ENCODE measurements at regions of chr10 and their contacts with region 1.

Region 1: GRCh38 chr10:25206693-25207414 is 32.1 kb downstream of the GPR158 start:
- DNase-seq: no peak
- H3K4me3 ChIP-seq: no peak overlapping the region
- H3K27ac ChIP-seq: no peak overlapping the region
- H3K4me1 ChIP-seq: no peaks in the 10 kb centered on the region
- H3K27me3 ChIP-seq: no peaks in the 10 kb centered on the region
- CTCF ChIP-seq: no peak

Region 2: DNA sequence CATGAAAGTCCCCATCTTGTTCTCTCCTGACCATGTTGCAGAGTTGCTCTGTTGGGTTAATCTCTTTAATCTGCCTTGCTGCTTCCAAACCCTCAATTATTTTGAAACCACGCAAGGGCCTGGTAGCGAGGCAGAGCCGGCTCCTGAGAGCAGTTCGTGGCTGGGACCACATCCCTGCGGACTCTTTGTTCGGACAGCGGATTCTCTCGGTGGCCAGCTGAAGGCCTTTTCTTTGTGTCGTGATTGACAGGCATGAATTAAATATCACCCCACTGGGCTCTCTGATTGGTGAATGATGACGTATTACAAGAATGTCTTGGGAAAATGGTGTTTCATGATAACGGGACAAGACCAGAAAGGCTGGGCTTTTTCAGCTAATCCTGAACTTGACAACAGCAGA is 416.3 kb before region 1 on chr10:
- CTCF ChIA-PET with region 1: no interaction called
- POLR2A ChIA-PET with region 1: no interaction called
- intact Hi-C with region 1: no loop called
- DNase-seq: no peak
- H3K4me3 ChIP-seq: no peak overlapping the region
- H3K27ac ChIP-seq: no peak overlapping the region
- H3K4me1 ChIP-seq: no peaks in the 10 kb centered on the region
- H3K27me3 ChIP-seq: no peaks in the 10 kb centered on the region
- CTCF ChIP-seq: no peak

Region 3: GRCh38 chr10:25159591-25159990 is 47.3 kb before region 1 on chr10:
- CTCF ChIA-PET with region 1: no interaction called
- POLR2A ChIA-PET with region 1: no interaction called
- intact Hi-C with region 1: no loop called
- DNase-seq: peak; percentile 19
- H3K4me3 ChIP-seq: no peak overlapping the region
- H3K27ac ChIP-seq: no peak overlapping the region
- H3K4me1 ChIP-seq: no peaks in the 10 kb centered on the region
- H3K27me3 ChIP-seq: no peaks in the 10 kb centered on the region
- CTCF ChIP-seq: no peak

Region 4: GRCh38 chr10:25191162-25191895 is 15.5 kb before region 1 on chr10:
- CTCF ChIA-PET with region 1: interaction called, 11 read pairs
- POLR2A ChIA-PET with region 1: no interaction called
- intact Hi-C with region 1: no loop called
- DNase-seq: no peak
- H3K4me3 ChIP-seq: no peak overlapping the region
- H3K27ac ChIP-seq: no peak overlapping the region
- H3K4me1 ChIP-seq: no peaks in the 10 kb centered on the region
- H3K27me3 ChIP-seq: peaks cover 9% of the 10 kb centered on the region
- CTCF ChIP-seq: no peak

Region 5: GRCh38 chr10:25405871-25406270 is 199.0 kb after region 1 on chr10:
- CTCF ChIA-PET with region 1: no interaction called
- POLR2A ChIA-PET with region 1: no interaction called
- intact Hi-C with region 1: no loop called
- DNase-seq: no peak
- H3K4me3 ChIP-seq: no peak overlapping the region
- H3K27ac ChIP-seq: no peak overlapping the region
- H3K4me1 ChIP-seq: no peaks in the 10 kb centered on the region
- H3K27me3 ChIP-seq: peaks cover 4% of the 10 kb centered on the region
- CTCF ChIP-seq: no peak

Measured in A673 (cell line).